Dendritic cell treated with granulocyte-macrophage colony-stimulating factor and Interleukin-4, amounts not matched to agents 40 ng/mL and 50 ng/mL, for 4 days (primary cell): ENCODE measurements at regions of chr20 and their contacts with region 1.

Region 1: GRCh38 chr20:56554869-56555268 is 21.8 kb downstream of the FAM209B start:
- H3K4me3 Mint-ChIP-seq: no peak overlapping the region
- H3K27ac Mint-ChIP-seq: peak overlapping the region; percentile 78
- H3K4me1 Mint-ChIP-seq: peaks cover 33% of the 10 kb centered on the region
- H3K27me3 Mint-ChIP-seq: peaks cover 7% of the 10 kb centered on the region

Region 2: GRCh38 chr20:56574531-56575142 is 19.8 kb after region 1 on chr20:
- intact Hi-C with region 1: loop called (anchors 1 kb)
- H3K4me3 Mint-ChIP-seq: no peak overlapping the region
- H3K27ac Mint-ChIP-seq: no peak overlapping the region
- H3K4me1 Mint-ChIP-seq: peaks cover 4% of the 10 kb centered on the region
- H3K27me3 Mint-ChIP-seq: peaks cover 18% of the 10 kb centered on the region

Region 3: GRCh38 chr20:56826705-56827631 is 272.1 kb after region 1 on chr20:
- intact Hi-C with region 1: no loop called
- H3K4me3 Mint-ChIP-seq: no peak overlapping the region
- H3K27ac Mint-ChIP-seq: no peak overlapping the region
- H3K4me1 Mint-ChIP-seq: no peaks in the 10 kb centered on the region
- H3K27me3 Mint-ChIP-seq: peaks cover 32% of the 10 kb centered on the region

Region 4: DNA sequence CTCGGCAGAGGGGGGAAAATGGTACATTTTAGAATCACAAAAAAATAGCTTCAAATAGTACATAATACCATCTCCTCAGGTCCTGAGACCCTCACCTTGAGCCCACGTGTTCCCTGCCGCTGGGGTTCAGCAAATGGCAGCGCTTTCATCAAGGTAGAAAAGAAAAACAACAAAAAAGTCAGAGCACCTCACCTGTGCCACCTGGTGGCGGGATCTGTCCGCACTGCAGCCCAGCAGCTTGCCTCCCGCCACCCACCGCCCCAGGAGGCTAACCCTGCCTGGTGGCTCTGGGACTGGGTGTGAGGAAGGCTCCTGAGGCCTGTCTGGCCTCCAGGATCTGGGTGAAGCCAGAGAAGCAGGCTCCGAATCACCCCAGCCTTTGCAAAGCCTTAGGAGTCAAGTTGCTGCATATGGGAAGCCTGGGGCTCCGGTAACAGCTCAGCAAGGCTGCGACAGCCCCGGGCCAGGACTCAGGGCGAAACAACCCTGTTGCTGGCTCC is 440.8 kb after region 1 on chr20:
- intact Hi-C with region 1: loop called (anchors 10 kb)
- H3K4me3 Mint-ChIP-seq: no peak overlapping the region
- H3K27ac Mint-ChIP-seq: no peak overlapping the region
- H3K4me1 Mint-ChIP-seq: no peaks in the 10 kb centered on the region
- H3K27me3 Mint-ChIP-seq: peaks cover 3% of the 10 kb centered on the region

Region 5: DNA sequence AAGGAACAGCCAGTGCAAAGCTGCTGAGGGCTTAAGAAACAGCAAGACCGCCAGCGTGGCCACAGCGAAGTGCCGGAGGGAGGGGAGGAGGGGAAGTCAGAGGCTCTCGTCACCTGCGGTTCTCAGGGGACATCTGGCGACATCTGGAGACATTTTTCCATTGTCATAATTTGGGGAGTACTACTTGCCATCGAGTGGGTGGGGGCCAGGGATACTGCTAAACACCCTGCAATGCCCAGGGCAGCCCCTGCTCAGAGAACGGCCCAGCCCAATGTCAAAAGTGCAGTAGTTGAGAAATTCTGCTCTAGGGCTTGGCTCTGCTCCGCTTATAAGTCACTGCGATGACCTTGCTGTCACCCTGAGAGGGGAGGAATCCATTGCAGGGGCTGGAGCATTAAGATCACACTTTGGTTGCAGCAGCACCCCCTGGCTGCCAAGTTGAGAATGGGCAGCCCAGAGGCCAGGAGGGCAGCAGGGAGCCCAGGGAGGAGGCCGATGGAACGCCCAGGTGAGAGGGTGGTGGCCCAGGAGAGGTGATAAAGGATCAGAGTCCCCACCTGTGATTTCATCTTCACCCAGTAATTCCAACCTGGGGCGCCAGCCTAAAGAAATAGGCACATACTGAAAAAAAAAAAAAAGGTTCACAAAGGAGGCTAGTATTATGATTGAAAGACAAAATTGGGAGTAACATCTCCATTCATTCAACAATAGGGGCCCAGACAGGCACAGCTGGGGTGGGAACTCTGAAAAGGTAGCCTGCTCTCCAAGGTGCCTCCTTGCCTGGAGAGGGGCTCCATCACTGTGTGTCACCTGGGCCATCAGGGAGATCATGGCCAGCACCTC is 493.4 kb after region 1 on chr20:
- intact Hi-C with region 1: loop called (anchors 5 kb)
- H3K4me3 Mint-ChIP-seq: no peak overlapping the region
- H3K27ac Mint-ChIP-seq: no peak overlapping the region
- H3K4me1 Mint-ChIP-seq: no peaks in the 10 kb centered on the region
- H3K27me3 Mint-ChIP-seq: no peaks in the 10 kb centered on the region

Region 6: GRCh38 chr20:57346477-57346876 is 791.6 kb after region 1 on chr20:
- intact Hi-C with region 1: loop called (anchors 5 kb)
- H3K4me3 Mint-ChIP-seq: no peak overlapping the region
- H3K27ac Mint-ChIP-seq: no peak overlapping the region
- H3K4me1 Mint-ChIP-seq: peaks cover under 1% of the 10 kb centered on the region
- H3K27me3 Mint-ChIP-seq: peaks cover 34% of the 10 kb centered on the region